ENCODE measurements at regions of chr17 and their contacts with region 1.

Region 1: GRCh38 chr17:7745748-7746470 is 28.4 kb downstream of the DNAH2 start:
- DNase-seq: no peak

Region 2: DNA sequence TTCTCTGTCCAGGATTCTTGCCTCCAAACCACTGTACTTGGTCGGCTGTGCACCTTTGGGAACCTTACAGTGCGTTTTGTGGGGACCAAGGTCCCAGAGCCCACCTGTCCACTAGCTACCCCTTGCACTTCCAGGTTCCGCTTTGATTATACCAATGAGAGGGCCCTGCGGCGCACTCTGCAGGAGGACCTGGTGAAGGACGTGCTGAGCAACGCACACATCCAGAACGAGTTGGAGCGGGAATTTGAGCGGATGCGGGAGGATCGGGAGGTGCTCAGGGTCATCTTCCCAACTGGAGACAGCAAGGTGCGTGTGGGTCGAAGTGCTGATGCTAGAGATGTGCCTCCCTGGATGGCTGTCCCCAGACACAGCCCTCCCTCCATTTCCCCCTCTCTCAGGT is 242.9 kb before region 1 on chr17:
- intact Hi-C with region 1: no loop called
- DNase-seq: peak in 1 of 10 donors; percentile 70

Region 3: GRCh38 chr17:7538891-7539290 is 207.0 kb before region 1 on chr17:
- intact Hi-C with region 1: no loop called
- DNase-seq: no peak

Region 4: DNA sequence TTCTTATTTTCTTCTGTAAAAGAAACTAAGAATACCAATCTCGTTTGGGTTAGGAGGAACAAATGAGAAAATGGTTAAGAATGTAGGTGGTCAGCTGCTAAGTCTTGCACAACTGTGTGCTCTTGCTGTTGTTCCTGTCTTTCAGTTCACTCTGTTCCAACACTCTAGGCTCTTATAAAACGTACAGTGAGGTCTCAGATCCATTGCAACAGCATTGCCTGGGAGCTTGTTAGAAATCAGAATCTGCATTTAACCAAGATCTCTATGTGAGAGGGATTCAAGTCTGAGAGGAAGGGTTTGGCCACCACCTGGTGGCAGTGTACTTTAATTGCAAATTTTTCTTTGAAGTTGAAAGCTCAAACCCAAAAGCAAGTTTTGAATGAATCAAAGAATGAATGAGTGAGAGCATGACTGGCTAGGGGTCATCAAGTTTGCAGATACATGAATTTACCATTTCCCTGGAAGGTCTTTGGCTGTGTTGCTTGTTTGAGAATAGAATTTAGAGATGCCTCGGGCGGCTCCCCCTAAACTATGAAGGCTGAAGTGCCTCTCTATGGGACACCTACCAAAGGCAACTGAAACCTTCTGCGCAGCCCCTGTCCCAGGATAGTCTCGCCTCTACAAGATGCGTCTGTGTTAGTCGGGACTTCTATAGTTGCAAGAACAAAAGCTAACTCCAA is 295.5 kb after region 1 on chr17:
- intact Hi-C with region 1: loop called (anchors 10 kb)
- DNase-seq: peak in 2 of 10 donors; percentile 26 to 43

Measured in posterior cingulate gyrus (tissue), 11 donors.